ENCODE measurements at regions of chr5 and their contacts with region 1.

Region 1: GRCh38 chr5:171367424-171368370 is 20.0 kb upstream of the NPM1 start:
- DNase-seq: no peak
- ATAC-seq: no peak
- H3K4me3 ChIP-seq: no peak overlapping the region
- H3K4me3 Mint-ChIP-seq: no peak overlapping the region
- H3K27ac ChIP-seq: no peak overlapping the region
- H3K27ac Mint-ChIP-seq: no peak overlapping the region
- H3K4me1 ChIP-seq: no peaks in the 10 kb centered on the region
- H3K4me1 Mint-ChIP-seq: no peaks in the 10 kb centered on the region
- H3K27me3 ChIP-seq: peaks cover 0 to 23% of the 10 kb centered on the region in 2 experiments
- H3K27me3 Mint-ChIP-seq: peaks cover 23 to 24% of the 10 kb centered on the region in 2 donors

Region 2: GRCh38 chr5:171351536-171352073 is 16.1 kb before region 1 on chr5:
- CTCF ChIA-PET with region 1: no interaction called
- POLR2A ChIA-PET with region 1: no interaction called
- DNase-seq: no peak
- ATAC-seq: no peak
- H3K4me3 ChIP-seq: no peak overlapping the region
- H3K4me3 Mint-ChIP-seq: no peak overlapping the region
- H3K27ac ChIP-seq: no peak overlapping the region
- H3K27ac Mint-ChIP-seq: no peak overlapping the region
- H3K4me1 ChIP-seq: peaks cover 0 to 4% of the 10 kb centered on the region in 2 experiments
- H3K4me1 Mint-ChIP-seq: no peaks in the 10 kb centered on the region
- H3K27me3 ChIP-seq: peaks cover 0 to 10% of the 10 kb centered on the region in 2 experiments
- H3K27me3 Mint-ChIP-seq: peaks cover 2 to 4% of the 10 kb centered on the region in 2 donors

Region 3: GRCh38 chr5:171379961-171380360 is 12.3 kb after region 1 on chr5:
- CTCF ChIA-PET with region 1: interaction called in 1 of 2 experiments, 12 read pairs
- POLR2A ChIA-PET with region 1: no interaction called
- DNase-seq: no peak
- ATAC-seq: no peak
- H3K4me3 ChIP-seq: no peak overlapping the region
- H3K4me3 Mint-ChIP-seq: no peak overlapping the region
- H3K27ac ChIP-seq: no peak overlapping the region
- H3K27ac Mint-ChIP-seq: no peak overlapping the region
- H3K4me1 ChIP-seq: no peaks in the 10 kb centered on the region
- H3K4me1 Mint-ChIP-seq: no peaks in the 10 kb centered on the region
- H3K27me3 ChIP-seq: peaks cover 0 to 7% of the 10 kb centered on the region in 2 experiments
- H3K27me3 Mint-ChIP-seq: no peaks in the 10 kb centered on the region

Region 4: DNA sequence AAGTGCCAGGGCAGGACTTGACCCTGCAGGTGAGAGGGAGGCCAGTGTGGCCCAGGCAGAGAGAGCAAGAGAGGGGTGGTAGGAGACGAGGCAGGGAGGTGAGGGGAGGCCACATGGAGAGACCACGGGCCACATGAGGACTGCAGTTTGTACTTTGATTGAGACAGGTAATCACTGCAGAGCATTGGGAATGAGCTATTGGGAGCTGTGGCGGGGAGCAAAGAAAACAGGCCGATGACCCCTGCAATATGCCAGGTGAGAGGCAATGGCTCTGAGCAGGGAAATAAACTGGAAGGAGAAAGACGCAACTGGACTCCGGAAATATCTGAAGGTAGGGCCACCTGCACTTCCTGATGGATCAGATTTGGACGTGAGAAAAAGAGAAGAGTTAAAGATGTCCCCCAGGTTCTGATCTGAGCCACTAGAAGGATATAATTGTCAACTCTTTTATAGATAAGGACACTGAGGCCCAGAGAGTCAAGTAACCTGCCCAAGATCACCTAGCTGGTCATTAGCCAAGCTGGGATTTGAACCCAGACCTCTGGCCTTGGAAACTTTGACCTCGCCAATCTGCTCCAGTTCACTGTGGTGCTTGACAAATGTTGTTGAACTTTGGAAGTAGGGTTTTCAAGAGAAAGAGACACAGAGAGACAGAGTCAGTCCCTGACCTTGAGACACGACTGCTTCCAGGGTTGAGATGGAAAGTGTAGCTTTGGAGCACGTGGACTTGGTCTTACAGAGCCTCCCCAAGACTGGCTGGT is 1361.0 kb after region 1 on chr5:
- CTCF ChIA-PET with region 1: no interaction called
- POLR2A ChIA-PET with region 1: interaction called in 1 of 2 experiments, 13 read pairs
- DNase-seq: no peak
- ATAC-seq: no peak
- H3K4me3 ChIP-seq: no peak overlapping the region
- H3K4me3 Mint-ChIP-seq: no peak overlapping the region
- H3K27ac ChIP-seq: no peak overlapping the region
- H3K27ac Mint-ChIP-seq: no peak overlapping the region
- H3K4me1 ChIP-seq: no peaks in the 10 kb centered on the region
- H3K4me1 Mint-ChIP-seq: no peaks in the 10 kb centered on the region
- H3K27me3 ChIP-seq: no peaks in the 10 kb centered on the region
- H3K27me3 Mint-ChIP-seq: no peaks in the 10 kb centered on the region